ENCODE measurements at regions of chr6 and their contacts with region 1.

Region 1: DNA sequence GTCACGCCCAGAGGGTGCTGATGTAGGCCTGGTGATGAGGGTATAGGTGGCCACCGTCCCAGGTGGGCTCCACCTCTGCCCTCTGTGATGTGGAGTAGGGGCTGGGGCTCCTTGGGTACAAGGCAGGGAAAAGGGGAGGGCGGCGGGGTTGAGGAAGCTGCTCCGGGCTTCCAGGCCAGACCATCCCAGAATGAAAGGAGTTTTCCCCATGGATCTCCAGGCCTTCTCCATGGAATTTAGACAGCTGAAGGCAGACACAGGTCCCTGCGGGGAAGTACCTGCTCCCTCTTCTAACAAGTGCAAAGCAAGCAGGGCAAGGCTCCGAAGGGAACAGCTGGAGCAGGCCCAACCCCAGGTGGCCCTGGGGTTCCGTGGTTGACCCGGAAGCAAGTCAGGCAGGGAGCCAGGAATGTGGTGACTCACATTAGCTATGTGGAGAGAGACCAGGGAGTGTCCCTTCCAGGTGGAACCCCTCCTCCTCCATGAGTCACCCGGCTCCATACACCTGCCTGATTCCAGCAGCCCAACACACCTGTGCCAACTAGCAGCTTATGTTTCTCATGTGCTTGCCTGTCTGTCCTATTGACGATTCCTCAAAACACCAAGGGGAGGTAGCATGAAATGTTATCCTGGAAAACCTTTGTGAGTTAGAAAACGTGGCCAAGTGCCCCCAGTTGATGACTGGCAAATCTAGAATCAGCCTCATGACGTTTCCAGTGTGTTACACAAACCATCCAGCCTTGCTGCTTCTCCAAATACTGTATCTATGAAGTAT is 59.7 kb upstream of the SNX9 start:
- DNase-seq: peak; percentile 93 to 96
- H3K4me3 ChIP-seq: no peak overlapping the region
- H3K4me3 Mint-ChIP-seq: peak overlapping the region; percentile 30
- H3K27ac Mint-ChIP-seq: peak overlapping the region; percentile 94
- H3K4me1 ChIP-seq: peaks cover 30% of the 10 kb centered on the region
- H3K4me1 Mint-ChIP-seq: peaks cover 47% of the 10 kb centered on the region
- H3K27me3 ChIP-seq: no peaks in the 10 kb centered on the region
- H3K27me3 Mint-ChIP-seq: no peaks in the 10 kb centered on the region
- CTCF ChIP-seq: no peak

Region 2: GRCh38 chr6:157667211-157668008 is 95.9 kb before region 1 on chr6:
- CTCF ChIA-PET with region 1: no interaction called
- POLR2A ChIA-PET with region 1: no interaction called
- intact Hi-C with region 1: no loop called
- DNase-seq: peak in 1 of 2 experiments; percentile 59
- H3K4me3 ChIP-seq: no peak overlapping the region
- H3K4me3 Mint-ChIP-seq: no peak overlapping the region
- H3K27ac Mint-ChIP-seq: peak overlapping the region; percentile 2
- H3K4me1 ChIP-seq: no peaks in the 10 kb centered on the region
- H3K4me1 Mint-ChIP-seq: peaks cover 7% of the 10 kb centered on the region
- H3K27me3 ChIP-seq: no peaks in the 10 kb centered on the region
- H3K27me3 Mint-ChIP-seq: no peaks in the 10 kb centered on the region
- CTCF ChIP-seq: peak; percentile 86 to 89

Region 3: GRCh38 chr6:157787080-157787479 is 23.8 kb after region 1 on chr6:
- CTCF ChIA-PET with region 1: no interaction called
- POLR2A ChIA-PET with region 1: interaction called, 3 read pairs
- intact Hi-C with region 1: loop called (anchors 1 kb)
- DNase-seq: peak; percentile 72 to 75
- H3K4me3 ChIP-seq: no peak overlapping the region
- H3K4me3 Mint-ChIP-seq: no peak overlapping the region
- H3K27ac Mint-ChIP-seq: peak overlapping the region; percentile 46
- H3K4me1 ChIP-seq: peaks cover 6% of the 10 kb centered on the region; the same call in 1 of the 2 replicates
- H3K4me1 Mint-ChIP-seq: peaks cover 15% of the 10 kb centered on the region
- H3K27me3 ChIP-seq: no peaks in the 10 kb centered on the region
- H3K27me3 Mint-ChIP-seq: no peaks in the 10 kb centered on the region
- CTCF ChIP-seq: no peak

Region 4: DNA sequence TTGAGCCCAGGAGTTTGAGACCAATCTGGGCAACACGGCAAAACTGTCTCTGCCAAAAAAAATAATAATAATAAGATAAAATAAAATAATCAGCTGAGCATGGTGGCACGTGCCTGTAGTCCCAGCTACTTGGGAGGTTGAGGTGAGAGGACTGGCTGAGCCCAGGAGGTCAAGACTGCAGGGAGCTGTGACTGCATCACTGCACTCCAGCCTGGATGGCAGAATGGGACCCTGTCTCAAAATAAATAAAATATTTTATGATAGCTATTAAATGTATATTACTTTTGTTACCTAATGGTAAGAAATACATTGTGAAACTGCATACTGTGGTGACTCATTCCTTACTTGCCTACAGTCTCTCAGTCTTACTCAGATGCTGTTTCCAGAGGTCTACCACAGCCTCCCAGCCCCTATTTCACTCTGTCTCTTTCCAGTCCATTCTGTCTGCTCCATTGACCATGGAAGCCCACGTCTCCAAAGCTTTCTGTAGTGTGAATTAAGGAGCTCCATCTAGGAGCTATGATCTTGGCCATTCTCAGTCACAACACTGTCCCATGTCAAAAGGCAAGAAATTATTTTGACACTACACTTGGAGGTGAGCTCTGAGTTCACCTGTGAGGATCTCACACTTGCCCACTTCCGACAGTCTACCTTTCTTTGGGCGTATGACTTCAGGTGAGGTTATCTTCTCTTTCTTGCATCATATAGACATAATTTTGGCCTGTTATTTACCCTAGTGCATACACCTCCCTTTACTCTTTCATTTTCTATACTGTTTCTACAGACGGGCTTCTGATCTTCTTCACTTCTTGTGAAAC is 37.3 kb after region 1 on chr6:
- CTCF ChIA-PET with region 1: no interaction called
- POLR2A ChIA-PET with region 1: no interaction called
- intact Hi-C with region 1: no loop called
- DNase-seq: no peak
- H3K4me3 ChIP-seq: no peak overlapping the region
- H3K4me3 Mint-ChIP-seq: no peak overlapping the region
- H3K27ac Mint-ChIP-seq: no peak overlapping the region
- H3K4me1 ChIP-seq: no peaks in the 10 kb centered on the region
- H3K4me1 Mint-ChIP-seq: no peaks in the 10 kb centered on the region
- H3K27me3 ChIP-seq: no peaks in the 10 kb centered on the region
- H3K27me3 Mint-ChIP-seq: peaks cover 8% of the 10 kb centered on the region
- CTCF ChIP-seq: no peak

Region 5: DNA sequence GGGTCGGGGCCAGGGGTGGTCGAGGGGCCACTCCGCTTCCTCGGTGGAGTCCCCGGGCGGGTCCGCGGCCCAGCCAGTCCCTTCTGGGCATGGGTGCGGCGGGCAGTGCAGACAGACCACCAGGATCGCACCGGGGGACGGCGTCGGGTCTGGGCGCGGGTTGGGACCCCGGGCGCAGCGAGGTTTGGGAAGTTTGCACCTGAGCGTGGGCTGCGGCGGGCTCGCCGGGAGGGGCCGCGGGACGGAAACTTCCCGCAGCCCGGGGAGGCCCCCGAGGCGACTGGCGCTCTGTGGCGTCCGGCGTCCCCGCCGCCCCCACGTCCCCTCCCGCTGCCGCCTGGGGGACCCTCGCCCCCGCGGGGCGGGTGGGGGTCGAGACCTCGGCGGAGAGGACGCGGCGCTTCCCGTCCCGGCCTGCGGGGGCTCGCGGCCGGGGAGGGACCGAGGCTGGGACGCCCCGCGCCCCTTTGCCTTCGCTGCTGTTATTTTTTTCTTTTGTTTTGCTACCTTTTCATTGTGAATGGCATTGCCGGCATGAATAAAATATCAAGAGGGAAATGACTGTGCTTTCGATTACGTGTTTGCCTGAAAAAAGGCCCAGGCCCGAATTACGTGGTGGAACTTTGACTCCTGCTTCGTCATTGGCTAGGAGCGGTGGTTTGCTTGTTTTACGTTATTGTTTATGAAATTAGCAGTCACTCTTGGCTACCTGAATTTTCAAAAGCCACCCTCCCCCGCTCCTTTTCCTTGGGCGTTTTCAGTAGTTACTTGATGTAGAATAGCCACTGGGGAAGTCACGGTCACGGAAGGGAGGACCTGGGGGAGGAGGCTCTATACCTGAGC is 60.4 kb after region 1 on chr6:
- CTCF ChIA-PET with region 1: no interaction called
- POLR2A ChIA-PET with region 1: interaction called, 3 read pairs
- intact Hi-C with region 1: loop called (anchors 1 kb)
- DNase-seq: peak; percentile 33 to 49
- H3K4me3 ChIP-seq: peak overlapping the region; percentile 92
- H3K4me3 Mint-ChIP-seq: peak overlapping the region; percentile 93
- H3K27ac Mint-ChIP-seq: peak overlapping the region; percentile 93
- H3K4me1 ChIP-seq: peaks cover 22% of the 10 kb centered on the region
- H3K4me1 Mint-ChIP-seq: peaks cover 9% of the 10 kb centered on the region
- H3K27me3 ChIP-seq: no peaks in the 10 kb centered on the region
- H3K27me3 Mint-ChIP-seq: no peaks in the 10 kb centered on the region
- CTCF ChIP-seq: peak in 1 of 2 experiments; percentile 19

Region 6: DNA sequence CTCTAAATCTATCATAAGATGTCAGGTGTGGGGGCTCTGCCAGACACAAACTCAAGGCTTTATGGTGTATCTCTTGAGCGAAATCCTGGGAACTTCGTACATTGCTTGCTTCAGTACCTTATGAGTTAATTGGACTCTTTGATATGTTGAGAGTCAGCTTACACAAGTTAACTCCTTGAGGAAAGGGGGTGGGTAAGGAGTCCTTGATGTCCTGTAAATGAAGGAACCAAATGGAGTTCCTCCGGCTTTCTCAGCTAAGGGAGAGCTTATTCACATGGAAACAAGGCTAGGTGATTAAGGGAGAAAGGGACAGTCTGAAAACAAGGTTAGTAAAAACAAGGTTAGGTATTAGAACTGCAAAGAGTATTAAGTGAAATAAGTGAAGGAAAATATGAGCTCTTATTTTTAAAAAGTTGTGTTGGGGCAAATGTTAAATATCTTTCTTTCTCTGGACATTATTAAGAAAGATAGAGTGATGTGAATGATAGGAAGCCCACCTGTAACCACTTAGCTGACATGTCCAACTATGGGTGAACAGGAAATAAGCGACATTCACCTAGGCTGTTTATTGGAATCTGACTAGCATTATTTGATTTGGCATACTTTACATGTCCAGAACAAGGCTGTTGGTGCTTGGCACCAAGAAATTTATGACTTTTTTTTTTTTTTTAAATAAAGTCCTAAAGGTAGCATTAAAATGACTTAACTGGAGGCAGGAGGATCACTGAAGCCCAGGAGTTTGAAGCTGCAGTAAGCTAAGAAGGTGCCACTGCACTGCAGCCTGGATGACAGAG is 431.4 kb after region 1 on chr6:
- CTCF ChIA-PET with region 1: no interaction called
- POLR2A ChIA-PET with region 1: no interaction called
- intact Hi-C with region 1: no loop called
- DNase-seq: no peak
- H3K4me3 ChIP-seq: no peak overlapping the region
- H3K4me3 Mint-ChIP-seq: no peak overlapping the region
- H3K27ac Mint-ChIP-seq: no peak overlapping the region
- H3K4me1 ChIP-seq: no peaks in the 10 kb centered on the region
- H3K4me1 Mint-ChIP-seq: no peaks in the 10 kb centered on the region
- H3K27me3 ChIP-seq: no peaks in the 10 kb centered on the region
- H3K27me3 Mint-ChIP-seq: no peaks in the 10 kb centered on the region
- CTCF ChIP-seq: no peak

Measured in Caco-2 (cell line).